ENCODE measurements at regions of chr19 and their contacts with region 1.

Region 1: GRCh38 chr19:47542030-47542475 is 27.2 kb upstream of the NAPA start:
- DNase-seq: peak; percentile 86
- H3K4me3 ChIP-seq: peak overlapping the region in 1 of 4 donors; percentile 9
- H3K27ac ChIP-seq: peak overlapping the region; percentile 72 to 92 (median 88)
- H3K4me1 ChIP-seq: peaks cover 0 to 50% (median 37%) of the 10 kb centered on the region in 4 donors
- H3K27me3 ChIP-seq: peaks cover 0 to 8% (median 3%) of the 10 kb centered on the region in 3 donors
- CTCF ChIP-seq: no peak
- EP300 ChIP-seq: peak; percentile 58 to 91 (median 73)
- POLR2A ChIP-seq: no peak

Region 2: DNA sequence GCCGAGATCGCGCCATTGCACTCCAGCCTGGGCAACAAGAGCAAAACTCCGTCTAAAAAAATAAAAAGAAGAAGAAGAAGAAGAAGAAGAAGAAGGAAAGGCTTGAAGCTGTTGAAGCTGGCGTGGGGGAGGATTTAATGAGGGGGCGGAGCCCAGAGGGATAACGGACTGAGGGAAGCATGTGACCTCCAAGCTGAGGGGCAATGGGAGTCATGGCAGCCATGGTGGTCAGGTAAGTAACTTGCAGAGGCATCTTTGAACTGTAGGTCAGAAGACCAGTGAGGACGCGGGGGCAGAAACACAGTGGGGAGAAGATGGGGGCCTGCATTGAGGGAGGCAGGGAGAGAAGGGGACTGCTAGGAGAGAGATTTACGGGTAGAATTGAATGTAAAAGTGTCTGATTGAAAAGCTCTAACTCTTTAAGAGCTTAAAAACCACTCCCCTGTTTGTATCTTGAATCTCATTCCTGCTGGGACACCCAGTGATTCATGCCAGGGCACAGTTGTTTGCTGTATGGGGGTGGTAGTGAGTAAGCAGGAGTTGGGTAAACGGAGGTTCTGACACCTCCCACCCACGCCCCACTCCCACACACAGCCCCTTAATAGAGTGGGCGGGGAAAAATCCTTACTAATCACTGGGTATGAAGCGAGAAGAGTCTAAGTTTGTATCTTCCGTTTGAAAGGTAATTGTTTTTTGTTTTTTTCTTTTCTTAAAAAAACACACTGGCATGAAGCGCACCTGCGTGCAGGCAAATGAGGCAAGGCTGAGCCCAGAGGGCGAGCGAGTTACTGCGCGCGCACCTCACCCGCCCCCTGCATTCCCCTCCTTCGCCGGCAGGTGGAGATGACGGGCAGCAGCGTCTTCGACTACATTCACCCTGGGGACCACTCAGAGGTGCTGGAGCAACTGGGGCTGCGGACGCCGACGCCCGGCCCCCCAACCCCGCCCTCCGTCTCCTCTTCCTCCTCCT is 506.6 kb before region 1 on chr19:
- intact Hi-C with region 1: no loop called
- DNase-seq: peak; percentile 90
- H3K4me3 ChIP-seq: peak overlapping the region; percentile 21 to 51 (median 46)
- H3K27ac ChIP-seq: peak overlapping the region; percentile 47 to 73 (median 62)
- H3K4me1 ChIP-seq: peaks cover 0 to 15% (median 9%) of the 10 kb centered on the region in 4 donors
- H3K27me3 ChIP-seq: peaks cover 0 to 31% (median 19%) of the 10 kb centered on the region in 3 donors
- CTCF ChIP-seq: peak; percentile 81 to 100 (median 94)
- EP300 ChIP-seq: no peak
- POLR2A ChIP-seq: no peak

Region 3: GRCh38 chr19:47582320-47582909 is 40.4 kb after region 1 on chr19:
- intact Hi-C with region 1: no loop called
- DNase-seq: no peak
- H3K4me3 ChIP-seq: no peak overlapping the region
- H3K27ac ChIP-seq: no peak overlapping the region
- H3K4me1 ChIP-seq: no peaks in the 10 kb centered on the region
- H3K27me3 ChIP-seq: no peaks in the 10 kb centered on the region
- CTCF ChIP-seq: no peak
- EP300 ChIP-seq: no peak
- POLR2A ChIP-seq: no peak

Region 4: GRCh38 chr19:47600246-47601179 is 58.5 kb after region 1 on chr19:
- intact Hi-C with region 1: loop called (anchors 2 kb)
- DNase-seq: peak; percentile 100
- H3K4me3 ChIP-seq: peak overlapping the region; percentile 49 to 56 (median 52)
- H3K27ac ChIP-seq: peak overlapping the region; percentile 89 to 94 (median 92)
- H3K4me1 ChIP-seq: peaks cover 0 to 23% (median 21%) of the 10 kb centered on the region in 4 donors
- H3K27me3 ChIP-seq: no peaks in the 10 kb centered on the region
- CTCF ChIP-seq: no peak
- EP300 ChIP-seq: peak in 1 of 4 donors; percentile 83
- POLR2A ChIP-seq: peak; percentile 84 to 85